ENCODE measurements at regions of chr9 and their contacts with region 1.

Region 1: DNA sequence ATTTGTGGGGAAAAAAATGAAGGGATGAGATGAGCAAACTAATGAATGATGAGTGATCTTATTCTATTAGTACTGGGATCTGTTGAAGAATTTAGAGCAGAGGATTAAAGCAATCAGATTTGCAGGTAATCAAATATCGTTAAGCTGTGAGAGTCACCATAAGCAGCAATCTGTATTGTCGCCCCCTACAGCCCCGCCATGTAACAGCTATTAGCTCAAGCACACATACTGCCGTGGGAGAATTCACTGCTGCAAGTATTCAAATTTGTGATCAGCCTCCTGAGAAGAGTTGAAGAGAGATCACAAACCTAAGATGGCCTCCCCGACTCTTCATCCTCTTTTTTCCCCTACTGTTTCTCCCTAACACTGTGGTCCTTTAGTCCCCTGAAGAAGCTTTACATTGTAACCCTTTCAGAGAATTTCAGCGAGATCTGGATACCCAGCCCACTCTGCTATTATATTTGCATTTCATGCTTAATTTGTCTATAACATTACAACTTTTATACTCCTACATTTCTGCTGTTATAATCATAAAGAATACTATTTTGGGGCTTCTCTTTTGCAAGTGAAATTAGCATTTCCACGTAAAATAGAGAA is 28.5 kb upstream of the PHF24 start:
- DNase-seq: peak; percentile 13 to 66
- H3K4me3 ChIP-seq: no peak overlapping the region
- H3K27ac ChIP-seq: no peak overlapping the region
- H3K4me1 ChIP-seq: no peaks in the 10 kb centered on the region
- H3K27me3 ChIP-seq: no peaks in the 10 kb centered on the region
- CTCF ChIP-seq: peak; percentile 56 to 81 (median 66)
- EP300 ChIP-seq: no peak
- POLR2A ChIP-seq: no peak
- RAD21 ChIP-seq: peak; percentile 42 to 50

Region 2: GRCh38 chr9:34777666-34778065 is 151.9 kb before region 1 on chr9:
- CTCF ChIA-PET with region 1: no interaction called
- POLR2A ChIA-PET with region 1: no interaction called
- DNase-seq: no peak
- H3K4me3 ChIP-seq: no peak overlapping the region
- H3K27ac ChIP-seq: no peak overlapping the region
- H3K4me1 ChIP-seq: no peaks in the 10 kb centered on the region
- H3K27me3 ChIP-seq: no peaks in the 10 kb centered on the region; a peak in 1 of 7 replicates
- CTCF ChIP-seq: no peak
- EP300 ChIP-seq: no peak
- POLR2A ChIP-seq: no peak
- RAD21 ChIP-seq: no peak

Region 3: GRCh38 chr9:34948451-34948850 is 18.8 kb after region 1 on chr9:
- CTCF ChIA-PET with region 1: interaction called, 58 read pairs
- POLR2A ChIA-PET with region 1: no interaction called
- DNase-seq: no peak
- H3K4me3 ChIP-seq: no peak overlapping the region
- H3K27ac ChIP-seq: no peak overlapping the region
- H3K4me1 ChIP-seq: no peaks in the 10 kb centered on the region
- H3K27me3 ChIP-seq: no peaks in the 10 kb centered on the region; a peak in 1 of 7 replicates
- CTCF ChIP-seq: no peak
- EP300 ChIP-seq: no peak
- POLR2A ChIP-seq: no peak
- RAD21 ChIP-seq: no peak

Region 4: GRCh38 chr9:34957492-34958410 is 28.1 kb after region 1 on chr9 and contains the start of gene PHF24:
- CTCF ChIA-PET with region 1: interaction called, 22 read pairs
- POLR2A ChIA-PET with region 1: no interaction called
- DNase-seq: peak in 1 of 2 experiments; percentile 64
- H3K4me3 ChIP-seq: peak within 1 kb of the TSS; percentile 41 to 67 (median 48)
- H3K27ac ChIP-seq: no peak within 1 kb of the TSS
- H3K4me1 ChIP-seq: peaks cover 0 to 3% (median 1%) of the 10 kb centered on the region in 4 experiments; a peak in 6 of 7 replicates
- H3K27me3 ChIP-seq: peaks cover 1 to 22% (median 9%) of the 10 kb centered on the region in 4 experiments; a peak in 6 of 7 replicates
- CTCF ChIP-seq: peak in 2 of 3 experiments; percentile 6 to 10; a peak in 2 of 4 replicates
- EP300 ChIP-seq: no peak
- POLR2A ChIP-seq: no peak
- RAD21 ChIP-seq: peak in 1 of 2 experiments; percentile 22; a peak in 1 of 4 replicates
- total RNA-seq, gene PHF24: 0.35 and 1.0 TPM in 2 replicates

Region 5: GRCh38 chr9:35010351-35010958 is 80.9 kb after region 1 on chr9:
- CTCF ChIA-PET with region 1: no interaction called
- POLR2A ChIA-PET with region 1: no interaction called
- DNase-seq: no peak
- H3K4me3 ChIP-seq: no peak overlapping the region
- H3K27ac ChIP-seq: no peak overlapping the region
- H3K4me1 ChIP-seq: 0 out of 7 replicates have a peak, but pooled peaks cover 0 to 2% (median 0%) of the 10 kb centered on the region in 4 experiments
- H3K27me3 ChIP-seq: no peaks in the 10 kb centered on the region
- CTCF ChIP-seq: no peak
- EP300 ChIP-seq: no peak
- POLR2A ChIP-seq: no peak
- RAD21 ChIP-seq: no peak

Region 6: DNA sequence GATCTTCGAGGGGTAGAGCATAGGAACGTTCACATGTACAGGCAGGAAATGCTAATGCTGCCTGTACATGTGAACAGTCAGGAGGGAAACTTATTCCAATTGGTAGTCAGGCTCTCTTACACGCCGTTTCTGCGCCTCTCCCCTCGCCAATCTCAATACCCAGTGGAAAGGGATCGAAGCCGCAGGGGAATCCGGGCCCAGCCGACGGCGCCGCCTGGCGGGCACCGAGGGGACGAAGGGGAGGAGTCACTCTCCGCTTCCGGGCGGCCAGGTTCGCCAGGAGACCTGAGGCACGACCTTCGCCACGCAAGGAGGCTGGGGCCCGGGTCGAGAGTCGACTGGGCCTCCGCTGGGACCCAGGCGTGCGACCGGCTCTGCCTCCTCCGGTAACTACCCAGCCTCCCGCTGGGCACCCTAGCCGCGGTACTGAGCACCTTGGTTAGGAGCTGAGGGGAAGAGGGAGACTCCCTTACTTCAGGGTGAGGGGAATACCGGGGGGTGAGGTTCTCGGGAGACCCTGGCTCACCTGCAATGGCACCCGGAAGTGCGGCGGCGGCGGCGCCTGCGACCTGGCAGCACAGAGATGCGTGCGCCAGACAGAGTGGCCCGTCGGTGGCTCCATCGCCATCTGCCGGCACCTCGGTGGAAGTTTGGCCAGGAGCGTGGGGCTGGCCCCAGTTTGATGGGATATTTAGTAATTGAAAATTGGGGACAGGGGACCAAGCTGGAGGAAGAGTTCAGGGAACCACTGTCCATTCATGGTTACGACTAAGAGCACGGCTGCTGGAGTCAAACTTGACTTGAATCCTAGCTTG is 166.6 kb after region 1 on chr9 and contains the start of gene PIGO:
- CTCF ChIA-PET with region 1: no interaction called
- POLR2A ChIA-PET with region 1: no interaction called
- DNase-seq: peak; percentile 74 to 96
- H3K4me3 ChIP-seq: peak within 1 kb of the TSS; percentile 69 to 98 (median 86)
- H3K27ac ChIP-seq: peak within 1 kb of the TSS; percentile 96
- H3K4me1 ChIP-seq: peaks cover 0 to 2% (median under 1%) of the 10 kb centered on the region in 4 experiments; a peak in 3 of 7 replicates
- H3K27me3 ChIP-seq: no peaks in the 10 kb centered on the region
- CTCF ChIP-seq: peak; percentile 88 to 96 (median 93)
- EP300 ChIP-seq: no peak
- POLR2A ChIP-seq: peak; percentile 94 to 98
- RAD21 ChIP-seq: peak; percentile 55 to 72
- total RNA-seq, gene PIGO: 20.3 and 20.5 TPM in 2 replicates